ENCODE measurements at regions of chr9 and their contacts with region 1.

Region 1: GRCh38 chr9:121098567-121099198 is 23.9 kb downstream of the CNTRL start:
- DNase-seq: no peak
- ATAC-seq: peak; percentile 99
- H3K4me3 Mint-ChIP-seq: peak overlapping the region; percentile 50
- H3K27ac Mint-ChIP-seq: peak overlapping the region; percentile 75
- H3K4me1 Mint-ChIP-seq: peaks cover 25% of the 10 kb centered on the region
- H3K27me3 Mint-ChIP-seq: no peaks in the 10 kb centered on the region
- CTCF ChIP-seq: no peak

Region 2: DNA sequence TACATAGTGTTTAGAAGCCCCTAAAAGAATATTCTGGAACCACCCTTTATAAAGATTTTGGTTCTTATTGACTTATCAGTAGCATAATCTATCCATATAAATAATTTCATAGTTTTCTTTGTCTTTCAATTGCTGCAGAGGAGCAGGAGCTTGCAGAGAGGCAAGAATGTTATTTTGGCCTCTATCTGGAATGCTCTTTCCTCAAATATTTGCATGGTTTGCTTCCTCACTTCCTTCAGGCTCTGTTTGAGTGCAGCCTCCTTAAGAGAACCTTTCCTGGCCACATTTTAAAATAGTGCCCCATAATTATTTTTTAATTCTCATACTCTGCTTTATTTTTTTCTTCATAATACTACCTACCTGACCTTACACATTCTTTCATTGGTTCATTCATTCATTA is 50.1 kb before region 1 on chr9:
- CTCF ChIA-PET with region 1: no interaction called
- POLR2A ChIA-PET with region 1: no interaction called
- intact Hi-C with region 1: no loop called
- DNase-seq: no peak
- ATAC-seq: no peak
- H3K4me3 Mint-ChIP-seq: no peak overlapping the region
- H3K27ac Mint-ChIP-seq: no peak overlapping the region
- H3K4me1 Mint-ChIP-seq: no peaks in the 10 kb centered on the region
- H3K27me3 Mint-ChIP-seq: no peaks in the 10 kb centered on the region
- CTCF ChIP-seq: no peak

Region 3: GRCh38 chr9:121088576-121088975 is 10.1 kb before region 1 on chr9:
- CTCF ChIA-PET with region 1: no interaction called
- POLR2A ChIA-PET with region 1: interaction called, 4 read pairs
- intact Hi-C with region 1: loop called (anchors 1 kb)
- DNase-seq: no peak
- ATAC-seq: no peak
- H3K4me3 Mint-ChIP-seq: no peak overlapping the region
- H3K27ac Mint-ChIP-seq: no peak overlapping the region
- H3K4me1 Mint-ChIP-seq: peaks cover 19% of the 10 kb centered on the region
- H3K27me3 Mint-ChIP-seq: no peaks in the 10 kb centered on the region
- CTCF ChIP-seq: no peak

Region 4: GRCh38 chr9:121261107-121261460 is 162.4 kb after region 1 on chr9:
- CTCF ChIA-PET with region 1: no interaction called
- POLR2A ChIA-PET with region 1: no interaction called
- intact Hi-C with region 1: no loop called
- DNase-seq: no peak
- ATAC-seq: no peak
- H3K4me3 Mint-ChIP-seq: no peak overlapping the region
- H3K27ac Mint-ChIP-seq: no peak overlapping the region
- H3K4me1 Mint-ChIP-seq: no peaks in the 10 kb centered on the region
- H3K27me3 Mint-ChIP-seq: no peaks in the 10 kb centered on the region
- CTCF ChIP-seq: no peak